Activated CD4-positive, alpha-beta memory T cell treated with anti-CD3 and anti-CD28 coated beads for 36 hours (primary cell): ENCODE measurements at regions of chr12 and their contacts with region 1.

Region 1: GRCh38 chr12:128570191-128571065 is 253.3 kb downstream of the SLC15A4 start:
- DNase-seq: peak; percentile 59
- H3K4me3 Mint-ChIP-seq: no peak overlapping the region
- H3K27ac Mint-ChIP-seq: peak overlapping the region; percentile 38
- H3K4me1 Mint-ChIP-seq: peaks cover 4% of the 10 kb centered on the region
- H3K27me3 Mint-ChIP-seq: no peaks in the 10 kb centered on the region

Region 2: GRCh38 chr12:128513831-128514230 is 56.6 kb before region 1 on chr12:
- CTCF ChIA-PET with region 1: no interaction called
- POLR2A ChIA-PET with region 1: no interaction called
- intact Hi-C with region 1: no loop called
- DNase-seq: no peak
- H3K4me3 Mint-ChIP-seq: no peak overlapping the region
- H3K27ac Mint-ChIP-seq: no peak overlapping the region
- H3K4me1 Mint-ChIP-seq: no peaks in the 10 kb centered on the region
- H3K27me3 Mint-ChIP-seq: no peaks in the 10 kb centered on the region

Region 3: DNA sequence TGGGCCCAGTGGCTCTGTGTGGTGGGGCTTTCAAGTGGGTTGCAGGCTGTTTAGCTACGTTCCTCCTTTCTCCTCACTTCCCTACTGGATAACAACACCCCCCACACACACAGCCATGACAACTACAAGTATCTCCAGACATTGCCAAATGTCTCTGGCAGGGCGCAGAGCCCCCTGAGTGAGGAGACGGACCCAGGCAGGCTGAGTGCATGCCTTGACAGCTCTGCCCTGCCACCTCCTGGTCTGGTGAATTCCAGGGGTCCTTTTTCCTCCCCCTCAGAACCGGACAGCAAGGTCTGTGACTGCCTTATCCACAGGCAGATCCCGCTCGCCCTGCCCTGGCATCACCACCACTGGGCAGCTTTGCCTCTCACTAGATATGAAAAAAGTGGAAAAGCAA is 27.0 kb before region 1 on chr12:
- CTCF ChIA-PET with region 1: no interaction called
- POLR2A ChIA-PET with region 1: no interaction called
- intact Hi-C with region 1: loop called (anchors 1 kb)
- DNase-seq: no peak
- H3K4me3 Mint-ChIP-seq: no peak overlapping the region
- H3K27ac Mint-ChIP-seq: no peak overlapping the region
- H3K4me1 Mint-ChIP-seq: peaks cover 4% of the 10 kb centered on the region
- H3K27me3 Mint-ChIP-seq: no peaks in the 10 kb centered on the region

Region 4: DNA sequence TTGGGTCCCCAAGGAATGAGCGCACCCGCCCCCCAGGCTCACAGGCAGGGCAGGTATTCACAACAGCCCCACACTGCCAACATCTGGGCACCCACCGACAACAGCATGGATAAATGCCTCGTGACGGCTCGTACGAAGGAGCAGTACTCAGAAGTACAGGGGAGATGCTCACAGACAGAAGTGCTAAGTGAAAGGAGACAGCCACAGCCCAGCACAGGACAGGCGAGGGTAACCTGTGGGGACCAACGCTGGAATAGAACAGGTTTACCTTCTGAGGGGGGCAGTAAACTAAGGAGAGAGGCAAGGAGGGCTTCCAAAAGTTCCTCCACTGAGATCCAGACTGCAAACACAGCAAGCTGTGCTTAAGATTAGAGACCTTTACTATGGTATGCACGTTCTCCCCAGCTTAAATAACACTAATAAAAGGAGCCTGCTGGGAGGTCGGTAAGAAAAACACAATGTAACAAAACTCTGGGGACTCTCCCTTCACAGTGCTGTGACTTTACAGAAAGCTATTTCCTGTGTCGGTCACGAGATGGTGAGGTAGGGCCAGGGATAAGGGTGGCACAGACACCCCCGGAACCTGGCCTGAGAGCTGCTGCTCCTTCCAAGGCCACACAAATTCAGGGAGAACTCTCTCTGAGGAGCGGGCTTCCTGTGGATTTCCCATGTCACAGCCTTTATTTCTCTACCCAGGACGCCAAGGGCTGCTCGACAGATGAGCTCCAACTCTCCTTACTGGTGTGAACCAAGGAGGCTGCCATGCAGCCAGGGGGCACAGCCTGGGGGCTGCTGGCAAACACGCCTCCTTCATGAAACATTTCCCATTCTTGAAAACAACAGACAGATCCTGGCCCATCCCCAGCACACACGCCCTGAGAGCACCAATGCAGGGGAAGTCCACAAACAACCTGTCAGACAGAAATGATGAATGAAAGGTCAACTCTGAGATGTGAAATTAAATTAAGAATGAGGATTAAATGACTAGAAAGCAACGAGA is 227.0 kb after region 1 on chr12:
- CTCF ChIA-PET with region 1: no interaction called
- POLR2A ChIA-PET with region 1: no interaction called
- intact Hi-C with region 1: no loop called
- DNase-seq: no peak
- H3K4me3 Mint-ChIP-seq: no peak overlapping the region
- H3K27ac Mint-ChIP-seq: no peak overlapping the region
- H3K4me1 Mint-ChIP-seq: peaks cover 6% of the 10 kb centered on the region
- H3K27me3 Mint-ChIP-seq: no peaks in the 10 kb centered on the region